Activated CD4-positive, alpha-beta memory T cell treated with anti-CD3 and anti-CD28 coated beads for 36 hours (primary cell): ENCODE measurements at regions of chr7 and their contacts with region 1.

Region 1: GRCh38 chr7:2019607-2020511 is 212.9 kb downstream of the MAD1L1 start:
- DNase-seq: peak; percentile 43
- H3K4me3 Mint-ChIP-seq: no peak overlapping the region
- H3K27ac Mint-ChIP-seq: no peak overlapping the region
- H3K4me1 Mint-ChIP-seq: peaks cover 13% of the 10 kb centered on the region
- H3K27me3 Mint-ChIP-seq: no peaks in the 10 kb centered on the region

Region 2: GRCh38 chr7:1951159-1951536 is 68.7 kb before region 1 on chr7:
- CTCF ChIA-PET with region 1: no interaction called
- POLR2A ChIA-PET with region 1: no interaction called
- intact Hi-C with region 1: no loop called
- DNase-seq: peak; percentile 53
- H3K4me3 Mint-ChIP-seq: no peak overlapping the region
- H3K27ac Mint-ChIP-seq: no peak overlapping the region
- H3K4me1 Mint-ChIP-seq: peaks cover 13% of the 10 kb centered on the region
- H3K27me3 Mint-ChIP-seq: no peaks in the 10 kb centered on the region

Region 3: GRCh38 chr7:2109936-2110585 is 90.2 kb after region 1 on chr7:
- CTCF ChIA-PET with region 1: no interaction called
- POLR2A ChIA-PET with region 1: no interaction called
- intact Hi-C with region 1: loop called (anchors 1 kb)
- DNase-seq: peak; percentile 85
- H3K4me3 Mint-ChIP-seq: peak overlapping the region; percentile 21
- H3K27ac Mint-ChIP-seq: peak overlapping the region; percentile 38
- H3K4me1 Mint-ChIP-seq: peaks cover 31% of the 10 kb centered on the region
- H3K27me3 Mint-ChIP-seq: no peaks in the 10 kb centered on the region

Region 4: GRCh38 chr7:2281541-2281940 is 261.7 kb after region 1 on chr7:
- CTCF ChIA-PET with region 1: no interaction called
- POLR2A ChIA-PET with region 1: no interaction called
- intact Hi-C with region 1: no loop called
- DNase-seq: no peak
- H3K4me3 Mint-ChIP-seq: no peak overlapping the region
- H3K27ac Mint-ChIP-seq: no peak overlapping the region
- H3K4me1 Mint-ChIP-seq: no peaks in the 10 kb centered on the region
- H3K27me3 Mint-ChIP-seq: no peaks in the 10 kb centered on the region